ENCODE measurements at regions of chr1 and their contacts with region 1.

Region 1: GRCh38 chr1:35564037-35564883 is 6.7 kb downstream of the NCDN start:
- DNase-seq: no peak
- ATAC-seq: peak; percentile 88
- H3K4me3 ChIP-seq: no peak overlapping the region
- H3K27ac ChIP-seq: no peak overlapping the region
- H3K4me1 ChIP-seq: no peaks in the 10 kb centered on the region; the same call in 1 of the 2 replicates
- H3K27me3 ChIP-seq: no peaks in the 10 kb centered on the region
- CTCF ChIP-seq: peak; percentile 77 to 88 (median 82)
- EP300 ChIP-seq: no peak
- POLR2A ChIP-seq: no peak
- RAD21 ChIP-seq: peak; percentile 85

Region 2: DNA sequence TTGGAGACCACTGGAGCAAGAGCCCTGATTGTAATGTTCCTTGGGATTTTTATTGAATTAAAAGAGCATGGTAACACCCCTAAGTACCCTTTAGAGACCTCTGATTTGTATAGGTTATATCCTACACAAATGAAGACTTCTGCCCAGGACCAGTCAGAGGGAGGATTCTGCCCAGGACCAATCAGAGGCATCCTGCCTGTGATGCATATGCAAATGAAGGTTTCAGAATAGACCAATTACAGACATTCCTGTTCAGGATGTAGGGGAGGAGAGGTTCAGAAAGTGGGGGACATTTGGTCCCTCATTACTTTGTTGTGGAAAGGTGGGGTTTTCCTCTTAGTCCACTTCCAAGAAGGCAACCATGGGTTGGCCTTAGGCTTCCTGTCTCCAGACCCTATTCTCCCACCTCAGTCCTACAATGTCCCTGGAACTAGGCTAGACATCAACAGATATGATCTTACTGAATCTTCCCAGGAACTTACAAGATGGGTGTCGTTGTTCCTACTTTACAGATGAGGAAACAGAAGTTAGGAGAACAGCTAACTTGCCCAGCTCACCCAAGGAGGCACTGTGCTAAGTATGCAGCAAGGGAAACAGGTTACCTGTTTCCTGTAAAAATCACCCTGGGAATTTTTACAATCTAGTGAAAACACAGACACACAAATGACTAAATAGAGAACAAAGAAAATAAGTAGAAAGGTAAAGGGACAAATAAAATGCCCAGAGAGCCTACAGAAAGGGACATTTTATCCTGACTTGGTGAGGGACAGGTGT is 334.5 kb before region 1 on chr1:
- CTCF ChIA-PET with region 1: no interaction called
- POLR2A ChIA-PET with region 1: no interaction called
- RAD21 ChIA-PET with region 1: no interaction called
- SMC1A ChIA-PET with region 1: no interaction called
- in situ Hi-C with region 1: no loop called
- intact Hi-C with region 1: no loop called
- DNase-seq: no peak
- ATAC-seq: peak; percentile 51
- H3K4me3 ChIP-seq: no peak overlapping the region
- H3K27ac ChIP-seq: peak overlapping the region; percentile 60
- H3K4me1 ChIP-seq: peaks cover 5% of the 10 kb centered on the region; the same call in 1 of the 2 replicates
- H3K27me3 ChIP-seq: no peaks in the 10 kb centered on the region
- CTCF ChIP-seq: no peak
- EP300 ChIP-seq: no peak
- POLR2A ChIP-seq: no peak
- RAD21 ChIP-seq: no peak

Region 3: GRCh38 chr1:35539073-35539823 is 25.0 kb before region 1 on chr1:
- CTCF ChIA-PET with region 1: interaction called, 11 read pairs
- POLR2A ChIA-PET with region 1: interaction called, 3 read pairs
- RAD21 ChIA-PET with region 1: interaction called, 35 read pairs
- SMC1A ChIA-PET with region 1: interaction called, 9 read pairs
- in situ Hi-C with region 1: no loop called
- intact Hi-C with region 1: no loop called
- DNase-seq: peak; percentile 75
- ATAC-seq: peak; percentile 73
- H3K4me3 ChIP-seq: peak overlapping the region; percentile 39
- H3K27ac ChIP-seq: peak overlapping the region; percentile 87
- H3K4me1 ChIP-seq: peaks cover 27% of the 10 kb centered on the region
- H3K27me3 ChIP-seq: no peaks in the 10 kb centered on the region
- CTCF ChIP-seq: no peak
- EP300 ChIP-seq: no peak
- POLR2A ChIP-seq: peak; percentile 41
- RAD21 ChIP-seq: no peak

Region 4: GRCh38 chr1:35577071-35577998 is 13.1 kb after region 1 on chr1:
- CTCF ChIA-PET with region 1: interaction called, 12 read pairs
- POLR2A ChIA-PET with region 1: no interaction called
- RAD21 ChIA-PET with region 1: interaction called, 5 read pairs
- SMC1A ChIA-PET with region 1: interaction called, 5 read pairs
- in situ Hi-C with region 1: no loop called
- intact Hi-C with region 1: no loop called
- DNase-seq: peak; percentile 40
- ATAC-seq: peak; percentile 92
- H3K4me3 ChIP-seq: peak overlapping the region; percentile 57
- H3K27ac ChIP-seq: peak overlapping the region; percentile 13; the same call in 1 of the 2 replicates
- H3K4me1 ChIP-seq: peaks cover 25% of the 10 kb centered on the region
- H3K27me3 ChIP-seq: peaks cover 0 to 2% of the 10 kb centered on the region in 2 experiments; a peak in 2 of 4 replicates
- CTCF ChIP-seq: no peak
- EP300 ChIP-seq: no peak
- POLR2A ChIP-seq: peak; percentile 78
- RAD21 ChIP-seq: no peak

Region 5: DNA sequence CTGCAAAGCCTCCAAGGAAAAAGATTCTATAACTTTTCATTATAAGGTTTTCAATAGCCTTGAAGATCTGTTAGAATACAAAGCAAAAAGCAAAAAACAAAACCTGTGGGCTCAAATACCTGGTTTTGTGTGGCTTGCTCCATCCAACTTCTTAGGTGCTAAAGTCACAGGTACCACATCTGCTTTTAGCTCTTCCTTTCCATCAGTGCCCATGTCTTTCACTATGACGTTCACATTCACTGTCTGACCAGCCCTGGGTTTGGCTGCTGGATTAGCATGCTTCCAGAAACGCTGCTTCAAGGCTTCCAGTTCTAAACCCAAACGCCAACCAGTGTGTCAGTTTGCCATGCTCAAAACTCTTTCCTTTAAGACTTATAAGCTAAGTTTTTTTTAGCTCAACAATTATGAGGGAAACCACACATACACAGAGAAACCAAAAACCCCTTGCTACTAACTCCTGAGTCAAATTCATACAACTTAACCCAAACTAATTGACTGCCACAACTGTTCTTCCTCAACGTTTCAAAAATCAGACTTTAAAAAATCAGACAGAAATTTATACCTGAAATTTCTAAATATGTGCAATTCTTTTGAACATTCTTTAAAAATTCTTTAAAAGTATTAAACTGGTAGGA is 189.5 kb after region 1 on chr1:
- CTCF ChIA-PET with region 1: interaction called, 13 read pairs
- POLR2A ChIA-PET with region 1: interaction called, 10 read pairs
- RAD21 ChIA-PET with region 1: no interaction called
- SMC1A ChIA-PET with region 1: no interaction called
- in situ Hi-C with region 1: no loop called
- intact Hi-C with region 1: no loop called
- DNase-seq: no peak
- ATAC-seq: peak; percentile 78
- H3K4me3 ChIP-seq: no peak overlapping the region
- H3K27ac ChIP-seq: no peak overlapping the region
- H3K4me1 ChIP-seq: peaks cover 13% of the 10 kb centered on the region
- H3K27me3 ChIP-seq: no peaks in the 10 kb centered on the region
- CTCF ChIP-seq: no peak
- EP300 ChIP-seq: no peak
- POLR2A ChIP-seq: no peak
- RAD21 ChIP-seq: no peak

Region 6: GRCh38 chr1:35777109-35777508 is 212.8 kb after region 1 on chr1:
- CTCF ChIA-PET with region 1: interaction called, 58 read pairs
- POLR2A ChIA-PET with region 1: interaction called, 3 read pairs
- RAD21 ChIA-PET with region 1: interaction called, 12 read pairs
- SMC1A ChIA-PET with region 1: interaction called, 15 read pairs
- in situ Hi-C with region 1: loop called (anchors 5 kb)
- intact Hi-C with region 1: loop called (anchors 1 kb)
- DNase-seq: no peak
- ATAC-seq: peak; percentile 52
- H3K4me3 ChIP-seq: no peak overlapping the region
- H3K27ac ChIP-seq: no peak overlapping the region
- H3K4me1 ChIP-seq: peaks cover 9% of the 10 kb centered on the region
- H3K27me3 ChIP-seq: no peaks in the 10 kb centered on the region
- CTCF ChIP-seq: no peak
- EP300 ChIP-seq: no peak
- POLR2A ChIP-seq: no peak
- RAD21 ChIP-seq: no peak

Region 7: GRCh38 chr1:35947547-35947946 is 383.3 kb after region 1 on chr1:
- CTCF ChIA-PET with region 1: no interaction called
- POLR2A ChIA-PET with region 1: no interaction called
- RAD21 ChIA-PET with region 1: no interaction called
- SMC1A ChIA-PET with region 1: no interaction called
- in situ Hi-C with region 1: no loop called
- intact Hi-C with region 1: no loop called
- DNase-seq: no peak
- ATAC-seq: no peak
- H3K4me3 ChIP-seq: no peak overlapping the region
- H3K27ac ChIP-seq: no peak overlapping the region
- H3K4me1 ChIP-seq: 0 out of 2 replicates have a peak, but pooled peaks cover 3% of the 10 kb centered on the region
- H3K27me3 ChIP-seq: no peaks in the 10 kb centered on the region
- CTCF ChIP-seq: no peak
- EP300 ChIP-seq: no peak
- POLR2A ChIP-seq: no peak
- RAD21 ChIP-seq: no peak